ENCODE measurements at regions of chr2 and their contacts with region 1.

Region 1: DNA sequence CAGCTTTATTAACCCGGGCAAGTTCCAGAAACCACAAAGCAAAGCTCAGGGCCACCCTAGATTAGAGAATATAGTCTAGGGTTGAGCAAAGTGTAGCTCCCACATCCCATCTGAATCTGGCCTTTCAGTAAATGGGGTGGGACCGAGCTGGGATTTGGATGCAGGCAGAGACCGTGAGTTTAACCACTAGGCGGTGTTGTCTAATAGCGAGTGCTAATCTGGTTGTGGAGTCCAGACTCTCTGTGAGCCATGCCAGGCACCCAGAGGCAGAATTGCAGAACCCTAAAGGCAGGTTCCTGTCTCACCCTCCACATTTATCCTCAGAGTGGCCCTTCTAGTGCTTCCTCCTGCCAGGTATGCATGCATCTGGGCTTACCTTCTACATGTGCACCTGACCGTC is 435.9 kb downstream of the TSN start:
- DNase-seq: peak; percentile 73
- ATAC-seq: peak; percentile 95
- H3K4me3 Mint-ChIP-seq: no peak overlapping the region
- H3K27ac Mint-ChIP-seq: no peak overlapping the region
- H3K4me1 Mint-ChIP-seq: peaks cover 23% of the 10 kb centered on the region
- H3K27me3 Mint-ChIP-seq: no peaks in the 10 kb centered on the region
- CTCF ChIP-seq: peak; percentile 50; the same call in 1 of the 2 replicates

Region 2: DNA sequence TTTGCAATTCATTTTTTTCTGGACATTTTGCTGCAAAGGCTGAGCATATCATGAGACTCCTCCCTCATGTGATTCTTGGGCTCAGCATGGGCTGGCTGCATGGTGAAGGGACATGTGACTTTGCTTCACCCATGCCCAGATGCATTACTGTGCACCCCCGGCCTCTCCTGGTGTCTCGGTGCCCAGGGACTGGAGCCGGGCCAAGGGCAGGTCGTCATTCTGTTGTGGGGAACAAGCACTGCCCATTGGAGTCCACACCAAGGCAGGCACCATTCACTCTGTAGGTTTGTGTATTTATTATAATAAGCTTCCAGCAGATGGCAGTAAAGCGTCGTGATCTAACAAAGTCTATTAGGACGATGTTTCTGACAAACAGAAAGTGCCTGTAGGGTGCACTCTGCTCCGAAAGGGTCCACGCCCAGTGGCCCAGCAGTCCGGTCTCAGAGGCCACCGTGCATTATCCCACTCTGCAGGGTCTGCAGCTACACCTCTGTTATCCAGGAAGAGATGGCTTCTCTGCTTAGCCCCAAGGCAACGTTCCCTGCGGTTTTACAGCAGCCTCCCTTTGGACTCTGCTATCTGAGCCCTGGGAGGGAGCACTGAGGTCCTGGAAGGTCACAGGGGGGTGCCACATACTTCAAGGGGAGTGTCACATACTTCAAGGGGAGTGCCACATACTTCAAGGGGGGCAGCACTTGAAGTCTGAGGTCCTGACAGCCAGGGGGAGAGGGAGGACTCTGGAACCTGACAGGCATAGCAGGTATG is 216.3 kb before region 1 on chr2:
- CTCF ChIA-PET with region 1: interaction called, 11 read pairs
- POLR2A ChIA-PET with region 1: no interaction called
- DNase-seq: peak; percentile 58
- ATAC-seq: peak; percentile 95
- H3K4me3 Mint-ChIP-seq: no peak overlapping the region
- H3K27ac Mint-ChIP-seq: no peak overlapping the region
- H3K4me1 Mint-ChIP-seq: peaks cover 31% of the 10 kb centered on the region
- H3K27me3 Mint-ChIP-seq: no peaks in the 10 kb centered on the region
- CTCF ChIP-seq: peak; percentile 42; the same call in 1 of the 2 replicates

Region 3: DNA sequence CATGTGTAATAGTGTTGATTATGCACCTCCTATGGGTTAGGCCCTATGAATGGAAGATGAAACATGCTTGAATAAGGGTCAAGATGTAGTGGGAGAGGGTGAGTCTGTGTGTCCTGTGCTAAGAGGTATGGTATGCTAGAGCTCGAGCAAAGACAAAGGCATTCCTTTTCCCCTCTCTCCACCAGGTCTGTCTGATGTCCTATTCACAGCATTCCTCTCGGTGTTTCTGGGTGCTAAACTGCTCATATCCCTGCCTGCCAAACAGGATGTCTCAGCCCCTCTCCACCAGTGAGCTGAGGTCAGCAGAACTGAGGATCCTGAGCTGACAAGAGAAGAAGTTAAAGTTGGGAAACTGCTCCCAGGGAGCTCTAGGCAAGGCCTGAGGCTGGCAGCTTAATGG is 91.0 kb before region 1 on chr2:
- CTCF ChIA-PET with region 1: no interaction called
- POLR2A ChIA-PET with region 1: no interaction called
- DNase-seq: no peak
- ATAC-seq: peak; percentile 90
- H3K4me3 Mint-ChIP-seq: no peak overlapping the region
- H3K27ac Mint-ChIP-seq: peak overlapping the region; percentile 9; the same call in 1 of the 2 replicates
- H3K4me1 Mint-ChIP-seq: peaks cover 19% of the 10 kb centered on the region
- H3K27me3 Mint-ChIP-seq: peaks cover 3% of the 10 kb centered on the region
- CTCF ChIP-seq: no peak

Measured in WTC11 (cell line).